ENCODE measurements at regions of chr4 and their contacts with region 1.

Region 1: DNA sequence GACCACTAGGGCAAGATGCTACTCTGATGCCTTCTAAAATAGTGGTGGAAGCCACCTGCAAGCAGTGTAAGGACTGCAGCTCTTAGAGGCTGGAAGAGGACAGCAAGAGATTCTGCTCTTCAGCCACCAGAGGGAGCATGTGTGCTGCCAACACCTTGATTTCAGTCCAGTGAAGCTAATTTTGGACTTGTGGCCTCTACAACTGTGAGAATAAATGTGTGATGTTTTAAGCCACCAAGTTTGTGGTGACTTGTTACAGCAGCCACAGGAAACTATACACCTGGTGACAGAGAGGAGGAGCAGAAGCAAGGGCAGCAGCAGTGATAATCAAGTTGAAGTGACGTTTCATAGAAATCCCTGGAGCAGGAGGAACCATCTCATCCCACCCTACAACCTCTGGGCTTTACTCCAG is 55.9 kb downstream of the FGFBP1 start:
- DNase-seq: peak; percentile 57
- H3K4me3 Mint-ChIP-seq: no peak overlapping the region
- H3K27ac Mint-ChIP-seq: no peak overlapping the region
- H3K4me1 Mint-ChIP-seq: no peaks in the 10 kb centered on the region
- H3K27me3 Mint-ChIP-seq: no peaks in the 10 kb centered on the region

Region 2: GRCh38 chr4:15729910-15730533 is 152.7 kb before region 1 on chr4:
- CTCF ChIA-PET with region 1: interaction called, 16 read pairs
- intact Hi-C with region 1: loop called (anchors 1 kb)
- DNase-seq: peak; percentile 54
- H3K4me3 Mint-ChIP-seq: no peak overlapping the region
- H3K27ac Mint-ChIP-seq: no peak overlapping the region
- H3K4me1 Mint-ChIP-seq: peaks cover 13% of the 10 kb centered on the region
- H3K27me3 Mint-ChIP-seq: no peaks in the 10 kb centered on the region

Region 3: DNA sequence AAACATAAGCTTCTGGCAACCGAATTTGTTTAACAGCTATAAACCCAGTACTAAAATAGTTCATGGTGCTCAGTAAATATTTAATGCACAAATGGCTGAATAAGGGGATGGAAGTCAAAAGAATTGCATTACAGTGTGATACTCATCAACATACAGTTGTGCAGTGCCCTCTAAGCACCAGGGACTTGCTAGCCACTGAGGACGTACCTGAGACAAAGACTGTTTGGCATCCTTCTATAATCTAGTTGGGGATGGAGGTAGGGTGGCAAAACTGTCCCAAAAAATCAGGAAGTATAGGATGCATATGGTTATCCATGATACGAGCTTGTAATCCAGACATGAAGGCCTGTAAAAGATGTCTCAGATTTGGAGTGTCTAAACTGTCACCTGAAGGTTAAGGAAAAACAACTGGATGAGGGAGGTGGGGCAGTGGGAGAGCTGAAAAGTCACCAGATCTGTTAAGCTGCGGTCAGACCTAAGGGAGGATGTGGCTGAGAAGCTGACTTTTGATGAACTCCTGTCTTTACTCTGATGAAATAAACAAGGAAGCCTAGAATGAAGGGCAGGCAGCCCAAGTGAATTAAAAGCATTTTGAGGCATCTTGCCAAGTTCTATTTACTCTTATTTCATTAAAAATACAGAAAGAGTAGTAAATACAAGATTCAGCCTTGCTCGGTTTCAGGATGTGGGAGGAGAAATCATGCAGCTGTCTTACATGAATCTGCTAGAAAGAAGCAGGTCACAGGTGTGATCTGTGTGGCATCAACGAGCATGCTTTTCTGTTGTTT is 116.6 kb before region 1 on chr4:
- CTCF ChIA-PET with region 1: no interaction called
- intact Hi-C with region 1: no loop called
- DNase-seq: peak; percentile 75
- H3K4me3 Mint-ChIP-seq: no peak overlapping the region
- H3K27ac Mint-ChIP-seq: peak overlapping the region; percentile 50
- H3K4me1 Mint-ChIP-seq: peaks cover 56% of the 10 kb centered on the region
- H3K27me3 Mint-ChIP-seq: no peaks in the 10 kb centered on the region

Region 4: GRCh38 chr4:15868111-15868510 is 14.6 kb before region 1 on chr4:
- CTCF ChIA-PET with region 1: interaction called, 10 read pairs
- intact Hi-C with region 1: no loop called
- DNase-seq: peak; percentile 35
- H3K4me3 Mint-ChIP-seq: no peak overlapping the region
- H3K27ac Mint-ChIP-seq: no peak overlapping the region
- H3K4me1 Mint-ChIP-seq: peaks cover 1% of the 10 kb centered on the region
- H3K27me3 Mint-ChIP-seq: no peaks in the 10 kb centered on the region

Region 5: GRCh38 chr4:15938182-15938581 is 55.5 kb after region 1 on chr4:
- CTCF ChIA-PET with region 1: interaction called, 10 read pairs
- intact Hi-C with region 1: no loop called
- DNase-seq: no peak
- H3K4me3 Mint-ChIP-seq: no peak overlapping the region
- H3K27ac Mint-ChIP-seq: no peak overlapping the region
- H3K4me1 Mint-ChIP-seq: no peaks in the 10 kb centered on the region
- H3K27me3 Mint-ChIP-seq: no peaks in the 10 kb centered on the region

Region 6: DNA sequence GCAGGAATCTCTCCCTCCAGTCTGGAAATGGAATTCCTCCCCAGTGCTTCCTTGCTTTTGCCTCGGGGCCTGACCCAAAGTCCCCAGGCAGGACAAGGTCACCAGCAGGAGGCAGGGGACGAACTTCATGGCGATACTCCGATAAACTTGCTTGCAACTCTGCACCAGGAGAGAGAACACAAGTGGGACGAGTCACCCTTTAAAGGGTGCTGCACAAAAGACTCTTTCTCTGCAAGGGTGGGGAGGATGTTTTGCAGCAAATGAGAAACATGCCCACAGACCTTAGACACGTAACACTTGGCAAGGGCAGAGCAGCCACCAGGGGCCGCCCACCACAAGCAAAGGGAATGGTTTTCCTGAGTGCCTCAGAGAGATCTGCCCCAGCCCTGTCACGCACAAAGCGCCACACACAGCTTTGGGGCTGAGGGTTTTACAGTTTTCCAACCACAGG is 80.3 kb after region 1 on chr4 and contains the start of gene FGFBP2:
- CTCF ChIA-PET with region 1: interaction called, 18 read pairs
- intact Hi-C with region 1: no loop called
- DNase-seq: peak; percentile 76
- H3K4me3 Mint-ChIP-seq: no peak within 1 kb of the TSS
- H3K27ac Mint-ChIP-seq: no peak within 1 kb of the TSS
- H3K4me1 Mint-ChIP-seq: peaks cover 11% of the 10 kb centered on the region
- H3K27me3 Mint-ChIP-seq: peaks cover 2% of the 10 kb centered on the region
- total RNA-seq, gene FGFBP2: not detected

Region 7: GRCh38 chr4:16225863-16226815 is 343.5 kb after region 1 on chr4 and contains the start of gene TAPT1:
- CTCF ChIA-PET with region 1: no interaction called
- intact Hi-C with region 1: no loop called
- DNase-seq: peak; percentile 79
- H3K4me3 Mint-ChIP-seq: peak within 1 kb of the TSS; percentile 91
- H3K27ac Mint-ChIP-seq: peak within 1 kb of the TSS; percentile 98
- H3K4me1 Mint-ChIP-seq: peaks cover 56% of the 10 kb centered on the region
- H3K27me3 Mint-ChIP-seq: no peaks in the 10 kb centered on the region
- total RNA-seq, gene TAPT1: 48.6 to 48.9 TPM

Region 8: GRCh38 chr4:16264798-16265197 is 382.1 kb after region 1 on chr4:
- CTCF ChIA-PET with region 1: interaction called, 11 read pairs
- intact Hi-C with region 1: loop called (anchors 1 kb)
- DNase-seq: no peak
- H3K4me3 Mint-ChIP-seq: no peak overlapping the region
- H3K27ac Mint-ChIP-seq: no peak overlapping the region
- H3K4me1 Mint-ChIP-seq: peaks cover 5% of the 10 kb centered on the region
- H3K27me3 Mint-ChIP-seq: no peaks in the 10 kb centered on the region